Psoas muscle (tissue), 8 donors: ENCODE measurements at regions of chr4 and their contacts with region 1.

Region 1: GRCh38 chr4:163544407-163545038 is 50.0 kb downstream of the TMA16 start:
- DNase-seq: peak; percentile 34 to 63
- ATAC-seq: peak; percentile 44 to 89 (median 68)
- H3K4me3 ChIP-seq: peak overlapping the region; percentile 41
- H3K27ac ChIP-seq: no peak overlapping the region
- H3K4me1 ChIP-seq: no peaks in the 10 kb centered on the region
- H3K27me3 ChIP-seq: no peaks in the 10 kb centered on the region
- CTCF ChIP-seq: peak; percentile 86

Region 2: GRCh38 chr4:162497564-162498167 is 1046.9 kb before region 1 on chr4:
- intact Hi-C with region 1: loop called in 1 of 2 experiments (anchors 5 kb)
- DNase-seq: no peak
- ATAC-seq: peak; percentile 67 to 80 (median 70)
- H3K4me3 ChIP-seq: peak overlapping the region; percentile 42
- H3K27ac ChIP-seq: no peak overlapping the region
- H3K4me1 ChIP-seq: no peaks in the 10 kb centered on the region
- H3K27me3 ChIP-seq: no peaks in the 10 kb centered on the region
- CTCF ChIP-seq: peak; percentile 85

Region 3: GRCh38 chr4:163484906-163485305 is 59.6 kb before region 1 on chr4:
- intact Hi-C with region 1: loop called (anchors 2 to 5 kb)
- DNase-seq: no peak
- ATAC-seq: peak in 1 of 4 donors; percentile 32
- H3K4me3 ChIP-seq: no peak overlapping the region
- H3K27ac ChIP-seq: no peak overlapping the region
- H3K4me1 ChIP-seq: no peaks in the 10 kb centered on the region
- H3K27me3 ChIP-seq: peaks cover 0 to 3% (median 0%) of the 10 kb centered on the region in 3 donors
- CTCF ChIP-seq: peak; percentile 48

Region 4: GRCh38 chr4:163489929-163490328 is 54.6 kb before region 1 on chr4:
- intact Hi-C with region 1: loop called in 1 of 2 experiments (anchors 2 kb)
- DNase-seq: no peak
- ATAC-seq: no peak
- H3K4me3 ChIP-seq: no peak overlapping the region
- H3K27ac ChIP-seq: no peak overlapping the region
- H3K4me1 ChIP-seq: peaks cover 3% of the 10 kb centered on the region
- H3K27me3 ChIP-seq: no peaks in the 10 kb centered on the region
- CTCF ChIP-seq: no peak

Region 5: DNA sequence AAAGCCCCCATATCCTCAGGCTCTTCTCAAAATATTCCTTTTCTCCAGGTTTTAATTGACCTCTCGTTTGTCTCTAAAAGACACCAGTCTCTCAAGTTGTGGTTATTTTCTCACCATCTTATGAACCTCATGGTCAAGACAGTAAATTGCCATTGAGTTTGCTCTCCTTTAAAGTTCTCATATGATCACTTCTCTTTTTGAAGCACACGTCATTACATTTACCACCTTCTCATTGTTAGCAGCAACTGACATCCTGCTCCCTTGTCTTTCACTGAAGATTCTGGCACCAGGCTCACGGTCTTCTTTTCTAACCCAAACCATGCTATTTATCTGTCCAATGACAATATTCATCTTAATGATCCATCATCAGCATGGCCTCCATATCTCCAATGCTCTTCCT is 274.1 kb after region 1 on chr4:
- intact Hi-C with region 1: no loop called
- DNase-seq: no peak
- ATAC-seq: no peak
- H3K4me3 ChIP-seq: no peak overlapping the region
- H3K27ac ChIP-seq: no peak overlapping the region
- H3K4me1 ChIP-seq: no peaks in the 10 kb centered on the region
- H3K27me3 ChIP-seq: no peaks in the 10 kb centered on the region
- CTCF ChIP-seq: no peak